ENCODE measurements at regions of chrX and their contacts with region 1.

Region 1: GRCh38 chrX:46642145-46642544 is 68.6 kb downstream of the CHST7 start:
- DNase-seq: no peak
- ATAC-seq: peak; percentile 73
- H3K4me3 ChIP-seq: no peak overlapping the region
- H3K27ac ChIP-seq: no peak overlapping the region
- H3K4me1 ChIP-seq: peaks cover 3 to 10% of the 10 kb centered on the region in 2 experiments; a peak in 2 of 4 replicates
- H3K27me3 ChIP-seq: no peaks in the 10 kb centered on the region
- CTCF ChIP-seq: peak; percentile 11 to 41 (median 40); a peak in 4 of 6 replicates
- POLR2A ChIP-seq: no peak
- RAD21 ChIP-seq: peak; percentile 52

Region 2: GRCh38 chrX:46506076-46506475 is 136.1 kb before region 1 on chrX:
- CTCF ChIA-PET with region 1: no interaction called
- POLR2A ChIA-PET with region 1: no interaction called
- RAD21 ChIA-PET with region 1: no interaction called
- intact Hi-C with region 1: no loop called
- DNase-seq: no peak
- ATAC-seq: no peak
- H3K4me3 ChIP-seq: no peak overlapping the region
- H3K27ac ChIP-seq: no peak overlapping the region
- H3K4me1 ChIP-seq: no peaks in the 10 kb centered on the region
- H3K27me3 ChIP-seq: no peaks in the 10 kb centered on the region
- CTCF ChIP-seq: no peak
- POLR2A ChIP-seq: no peak
- RAD21 ChIP-seq: no peak

Region 3: GRCh38 chrX:46554942-46555341 is 87.2 kb before region 1 on chrX:
- CTCF ChIA-PET with region 1: interaction called, 18 read pairs
- POLR2A ChIA-PET with region 1: no interaction called
- RAD21 ChIA-PET with region 1: no interaction called
- intact Hi-C with region 1: loop called (anchors 5 kb)
- DNase-seq: no peak
- ATAC-seq: no peak
- H3K4me3 ChIP-seq: no peak overlapping the region
- H3K27ac ChIP-seq: no peak overlapping the region
- H3K4me1 ChIP-seq: peaks cover 3 to 17% of the 10 kb centered on the region in 2 experiments; a peak in 2 of 4 replicates
- H3K27me3 ChIP-seq: no peaks in the 10 kb centered on the region
- CTCF ChIP-seq: peak in 2 of 3 experiments; percentile 23 to 29; a peak in 3 of 6 replicates
- POLR2A ChIP-seq: no peak
- RAD21 ChIP-seq: peak; percentile 54

Region 4: DNA sequence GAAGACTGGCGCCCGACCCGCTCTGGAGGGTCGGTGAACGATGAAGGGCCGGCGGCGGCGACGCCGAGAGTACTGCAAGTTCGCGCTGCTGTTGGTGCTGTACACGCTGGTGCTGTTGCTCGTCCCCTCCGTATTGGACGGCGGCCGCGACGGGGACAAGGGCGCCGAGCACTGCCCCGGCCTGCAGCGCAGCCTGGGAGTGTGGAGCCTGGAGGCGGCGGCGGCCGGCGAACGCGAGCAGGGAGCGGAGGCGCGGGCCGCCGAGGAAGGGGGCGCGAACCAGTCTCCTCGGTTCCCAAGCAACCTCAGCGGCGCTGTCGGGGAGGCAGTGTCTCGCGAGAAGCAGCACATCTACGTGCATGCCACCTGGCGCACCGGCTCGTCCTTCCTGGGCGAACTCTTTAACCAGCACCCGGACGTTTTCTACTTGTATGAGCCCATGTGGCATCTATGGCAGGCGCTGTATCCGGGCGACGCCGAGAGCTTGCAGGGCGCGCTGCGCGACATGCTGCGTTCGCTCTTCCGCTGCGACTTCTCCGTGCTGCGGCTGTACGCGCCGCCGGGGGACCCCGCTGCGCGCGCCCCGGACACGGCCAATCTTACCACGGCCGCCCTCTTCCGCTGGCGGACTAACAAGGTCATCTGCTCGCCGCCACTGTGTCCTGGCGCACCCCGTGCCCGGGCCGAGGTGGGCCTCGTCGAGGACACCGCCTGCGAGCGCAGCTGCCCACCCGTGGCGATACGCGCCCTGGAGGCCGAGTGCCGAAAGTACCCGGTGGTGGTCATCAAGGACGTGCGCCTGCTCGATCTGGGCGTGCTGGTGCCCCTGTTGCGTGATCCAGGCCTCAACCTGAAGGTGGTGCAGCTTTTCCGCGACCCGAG is 68.0 kb before region 1 on chrX:
- CTCF ChIA-PET with region 1: no interaction called
- POLR2A ChIA-PET with region 1: no interaction called
- RAD21 ChIA-PET with region 1: no interaction called
- intact Hi-C with region 1: loop called (anchors 2 kb)
- DNase-seq: no peak
- ATAC-seq: peak; percentile 75
- H3K4me3 ChIP-seq: peak overlapping the region; percentile 51 to 62
- H3K27ac ChIP-seq: peak overlapping the region; percentile 86
- H3K4me1 ChIP-seq: peaks cover 8 to 40% of the 10 kb centered on the region in 2 experiments; a peak in 3 of 4 replicates
- H3K27me3 ChIP-seq: no peaks in the 10 kb centered on the region
- CTCF ChIP-seq: no peak
- POLR2A ChIP-seq: no peak
- RAD21 ChIP-seq: no peak

Region 5: GRCh38 chrX:46803140-46803539 is 161.0 kb after region 1 on chrX:
- CTCF ChIA-PET with region 1: no interaction called
- POLR2A ChIA-PET with region 1: no interaction called
- RAD21 ChIA-PET with region 1: no interaction called
- intact Hi-C with region 1: no loop called
- DNase-seq: no peak
- ATAC-seq: peak; percentile 73
- H3K4me3 ChIP-seq: no peak overlapping the region
- H3K27ac ChIP-seq: no peak overlapping the region
- H3K4me1 ChIP-seq: no peaks in the 10 kb centered on the region
- H3K27me3 ChIP-seq: no peaks in the 10 kb centered on the region
- CTCF ChIP-seq: peak; percentile 24 to 39 (median 33); a peak in 3 of 6 replicates
- POLR2A ChIP-seq: no peak
- RAD21 ChIP-seq: peak; percentile 36

Region 6: DNA sequence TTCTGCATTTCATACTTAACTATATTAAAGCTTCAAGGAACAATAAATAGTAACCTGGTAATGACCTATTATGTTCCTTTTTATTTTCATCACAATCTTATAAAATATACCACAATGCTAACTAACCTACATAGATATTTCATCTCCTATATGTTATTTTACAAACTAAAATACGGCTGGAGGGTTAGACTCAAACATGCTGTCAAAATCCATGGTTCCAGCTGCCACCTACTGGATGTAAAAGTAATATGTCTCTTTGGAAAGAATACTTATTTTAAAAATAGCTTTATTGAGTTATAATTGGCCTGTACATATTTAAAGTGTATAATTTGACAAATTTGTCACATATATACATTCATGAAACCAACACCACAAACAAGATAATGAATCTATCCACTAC is 451.1 kb after region 1 on chrX:
- CTCF ChIA-PET with region 1: no interaction called
- POLR2A ChIA-PET with region 1: no interaction called
- RAD21 ChIA-PET with region 1: no interaction called
- intact Hi-C with region 1: loop called (anchors 10 kb)
- DNase-seq: peak; percentile 10
- ATAC-seq: peak; percentile 42; the same call in 1 of the 2 replicates
- H3K4me3 ChIP-seq: no peak overlapping the region
- H3K27ac ChIP-seq: no peak overlapping the region
- H3K4me1 ChIP-seq: no peaks in the 10 kb centered on the region
- H3K27me3 ChIP-seq: no peaks in the 10 kb centered on the region
- CTCF ChIP-seq: peak; percentile 30 to 55 (median 49); a peak in 4 of 6 replicates
- POLR2A ChIP-seq: no peak
- RAD21 ChIP-seq: peak; percentile 63

Region 7: DNA sequence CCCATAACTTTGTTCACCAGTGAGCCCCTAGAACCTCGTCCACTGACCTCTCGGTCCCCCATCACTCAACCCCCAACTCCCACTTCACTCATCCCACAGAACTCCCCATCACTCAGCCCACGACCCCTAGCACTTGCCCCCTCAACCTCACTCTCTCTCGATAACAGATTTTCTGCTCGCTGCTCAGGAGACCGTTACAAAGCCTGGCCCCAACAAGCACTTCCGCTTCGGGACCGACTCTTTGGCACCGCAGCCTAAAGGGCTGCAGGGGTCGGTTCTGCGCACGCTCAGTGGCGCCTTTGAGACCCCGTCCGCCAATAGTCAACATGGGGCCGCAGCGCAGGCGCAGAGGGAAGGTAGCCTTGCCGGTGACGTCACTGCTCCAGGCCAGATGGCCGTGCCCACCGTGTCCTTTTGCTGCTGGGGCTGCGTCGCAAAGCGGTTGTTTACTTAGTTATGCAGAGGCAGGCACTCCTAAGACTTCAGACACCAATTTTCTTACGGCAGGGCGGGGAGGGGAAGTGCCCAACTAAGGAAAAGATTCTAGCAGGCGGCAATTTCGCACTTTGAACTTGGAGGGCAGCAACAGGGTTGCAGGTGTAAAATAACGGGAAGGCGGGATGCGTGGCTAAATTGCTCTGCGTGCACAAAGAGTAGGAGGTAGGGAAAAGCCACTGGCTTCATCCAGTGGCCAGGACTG is 1361.8 kb after region 1 on chrX and contains the start of gene ZNF182:
- CTCF ChIA-PET with region 1: no interaction called
- POLR2A ChIA-PET with region 1: no interaction called
- RAD21 ChIA-PET with region 1: no interaction called
- intact Hi-C with region 1: no loop called
- DNase-seq: peak; percentile 67
- ATAC-seq: peak; percentile 96
- H3K4me3 ChIP-seq: peak within 1 kb of the TSS; percentile 70 to 73
- H3K27ac ChIP-seq: peak within 1 kb of the TSS; percentile 36
- H3K4me1 ChIP-seq: no peaks in the 10 kb centered on the region
- H3K27me3 ChIP-seq: no peaks in the 10 kb centered on the region
- CTCF ChIP-seq: no peak
- POLR2A ChIP-seq: no peak
- RAD21 ChIP-seq: no peak
- total RNA-seq, gene ZNF182: 5.1 TPM